Activated naive CD4-positive, alpha-beta T cell treated with anti-CD3 and anti-CD28 coated beads for 36 hours (primary cell): ENCODE measurements at regions of chr3 and their contacts with region 1.

Region 1: DNA sequence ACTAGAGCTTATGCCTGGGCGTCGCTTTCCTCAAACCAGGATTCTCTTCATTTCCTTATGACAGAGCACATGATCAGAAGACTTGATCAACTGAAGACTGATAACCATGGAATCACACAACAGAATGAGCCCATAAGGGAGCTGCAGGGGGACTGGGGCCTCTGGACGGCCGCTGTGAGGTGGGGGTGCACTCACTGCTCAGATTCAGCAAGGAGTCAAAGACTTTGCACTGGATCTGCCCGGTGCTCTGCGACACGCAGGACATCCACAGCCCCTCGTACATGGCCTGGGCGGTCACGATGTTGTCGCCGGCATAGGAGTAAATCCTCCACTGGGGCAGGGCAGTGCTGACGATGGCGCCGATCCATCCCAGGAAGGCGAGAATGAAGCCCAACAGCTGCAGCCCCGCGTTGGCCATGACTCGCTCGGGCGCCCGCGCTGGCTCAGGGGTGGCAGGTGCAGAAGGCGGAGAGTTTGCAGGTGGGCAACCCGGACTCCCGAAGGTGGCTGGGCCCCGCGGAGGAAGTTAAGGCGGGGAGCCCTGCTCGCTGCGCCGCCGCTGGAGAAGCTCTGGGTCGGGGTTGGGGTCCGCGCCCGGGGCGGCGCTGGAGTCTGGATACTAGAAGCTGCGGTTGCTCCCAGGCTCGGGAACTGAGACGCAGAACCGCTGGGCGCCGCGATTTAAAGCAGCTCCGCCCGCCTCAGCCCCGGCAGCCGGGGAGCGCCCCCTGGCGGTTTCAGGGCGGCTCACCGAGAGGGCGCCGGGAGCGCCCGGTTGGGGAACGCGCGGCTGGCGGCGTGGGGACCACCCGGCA is at the start of gene CLDN1:
- DNase-seq: peak; percentile 75
- H3K4me3 Mint-ChIP-seq: peak within 1 kb of the TSS; percentile 75
- H3K27ac Mint-ChIP-seq: no peak within 1 kb of the TSS
- H3K4me1 Mint-ChIP-seq: peaks cover 30% of the 10 kb centered on the region
- H3K27me3 Mint-ChIP-seq: peaks cover 36% of the 10 kb centered on the region
- total RNA-seq, gene CLDN1: 0.88 to 0.96 TPM

Region 2: DNA sequence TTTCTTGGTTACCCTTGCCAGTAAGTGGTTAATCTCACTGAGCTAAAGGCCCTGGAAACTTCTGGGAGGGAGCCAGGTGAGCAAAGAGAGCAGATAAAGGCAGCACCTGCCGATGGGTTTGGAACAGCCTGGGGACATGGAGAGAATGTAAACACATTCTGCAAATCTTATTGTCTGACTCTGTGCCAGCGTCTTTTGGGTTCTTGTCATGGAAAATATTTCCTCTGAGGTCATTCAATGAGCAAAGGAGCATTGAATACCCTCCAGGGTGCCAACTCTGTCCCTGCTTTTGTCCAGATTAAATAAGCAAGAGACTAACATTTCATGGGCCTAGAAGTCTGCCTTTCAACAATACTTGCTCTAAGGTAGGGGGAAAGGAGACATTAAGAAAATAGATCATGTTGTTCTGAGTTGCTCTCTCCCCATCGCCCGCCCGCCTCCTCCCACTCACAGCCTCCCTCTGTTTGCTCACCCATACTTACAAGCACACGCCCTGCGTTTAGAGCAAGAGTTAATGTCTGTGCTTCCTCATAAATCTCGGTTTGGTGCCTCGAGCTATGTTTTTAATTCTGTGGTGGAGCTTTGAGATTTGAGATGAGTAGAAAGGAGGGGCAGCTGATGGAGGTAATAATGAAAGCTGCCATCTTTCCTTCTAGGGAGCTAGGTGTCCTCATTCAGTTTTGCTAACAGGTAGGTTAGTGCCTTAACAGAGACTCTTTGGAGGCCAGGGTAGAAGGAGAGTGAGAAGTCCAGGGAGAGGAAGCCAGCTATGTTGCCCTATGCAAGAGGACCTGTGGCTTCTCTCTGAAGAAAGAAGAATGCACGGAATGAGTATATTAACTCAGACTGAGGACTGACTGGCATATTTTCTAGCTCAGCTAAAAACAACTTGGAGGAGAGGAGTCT is 1017.3 kb before region 1 on chr3:
- CTCF ChIA-PET with region 1: no interaction called
- intact Hi-C with region 1: loop called (anchors 10 kb)
- DNase-seq: peak; percentile 59
- H3K4me3 Mint-ChIP-seq: peak overlapping the region; percentile 17
- H3K27ac Mint-ChIP-seq: peak overlapping the region; percentile 68
- H3K4me1 Mint-ChIP-seq: peaks cover 57% of the 10 kb centered on the region
- H3K27me3 Mint-ChIP-seq: no peaks in the 10 kb centered on the region

Region 3: DNA sequence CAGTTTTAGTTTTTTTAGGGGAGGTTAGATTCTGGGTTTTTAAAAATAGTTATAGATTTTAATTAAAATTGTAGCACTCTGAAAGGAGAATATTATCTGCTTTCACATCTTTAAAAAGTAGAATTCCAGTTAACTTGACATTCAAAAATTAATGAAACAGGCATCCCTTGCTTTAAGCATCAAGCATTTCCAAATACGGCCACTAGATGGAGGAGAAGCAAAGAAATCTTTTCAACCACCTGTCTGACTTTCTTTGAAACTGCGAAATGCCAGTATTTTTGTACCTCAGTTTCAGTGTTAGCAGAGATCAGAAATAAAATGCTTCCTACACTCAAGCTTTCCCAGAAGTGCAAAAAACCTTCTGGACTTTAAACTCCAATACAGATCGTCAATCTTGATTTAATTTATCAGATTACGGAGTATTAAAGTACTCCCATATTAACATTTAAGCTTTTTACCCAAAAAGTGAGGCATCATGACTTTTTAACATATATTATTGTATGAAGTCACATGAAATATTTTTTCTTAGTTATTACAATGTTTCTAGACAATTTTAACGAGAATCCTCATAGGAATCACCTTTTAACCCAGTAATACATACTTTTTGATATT is 354.6 kb before region 1 on chr3:
- CTCF ChIA-PET with region 1: interaction called, 5 read pairs
- intact Hi-C with region 1: loop called (anchors 1 kb)
- DNase-seq: peak; percentile 28
- H3K4me3 Mint-ChIP-seq: no peak overlapping the region
- H3K27ac Mint-ChIP-seq: no peak overlapping the region
- H3K4me1 Mint-ChIP-seq: no peaks in the 10 kb centered on the region
- H3K27me3 Mint-ChIP-seq: peaks cover 3% of the 10 kb centered on the region

Region 4: DNA sequence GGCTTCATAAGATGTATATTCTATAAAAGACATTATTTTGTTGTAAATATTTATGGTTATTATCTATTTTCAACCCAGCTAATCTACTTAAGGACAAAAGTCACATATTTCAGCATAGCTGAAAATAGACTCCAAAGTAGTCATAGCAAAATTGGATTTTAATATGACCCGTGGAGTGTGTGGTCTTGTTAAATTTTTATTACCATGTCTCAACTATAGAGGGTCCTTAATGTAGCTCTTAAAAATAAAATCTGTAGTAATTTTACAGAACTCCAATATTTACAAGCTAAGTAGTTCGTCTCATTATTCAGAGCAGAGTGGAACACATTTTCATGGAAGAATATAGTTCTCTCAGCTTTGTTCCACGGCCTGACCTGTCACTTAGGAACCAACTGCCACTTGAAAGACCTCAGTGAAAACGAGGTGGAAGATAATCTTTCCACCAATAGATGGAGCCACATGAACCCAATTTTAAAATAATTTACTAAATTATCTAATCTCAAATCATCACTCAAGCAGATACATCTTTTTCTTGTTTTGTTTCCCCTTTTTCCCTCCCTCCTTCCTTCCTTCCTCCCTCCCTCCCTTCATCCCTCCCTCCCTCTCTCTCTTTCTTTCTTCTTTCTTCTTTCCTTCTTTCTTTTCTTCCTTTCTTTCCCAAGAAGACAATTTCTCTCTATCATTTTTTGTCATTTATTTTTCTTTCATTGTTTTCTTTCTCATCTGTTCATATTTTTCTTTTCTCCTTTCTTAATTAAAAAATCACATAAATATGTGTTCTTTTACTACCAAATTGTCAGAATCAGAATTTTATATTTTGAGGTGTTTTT is 96.9 kb before region 1 on chr3:
- CTCF ChIA-PET with region 1: interaction called, 14 read pairs
- intact Hi-C with region 1: loop called (anchors 1 kb)
- DNase-seq: no peak
- H3K4me3 Mint-ChIP-seq: no peak overlapping the region
- H3K27ac Mint-ChIP-seq: no peak overlapping the region
- H3K4me1 Mint-ChIP-seq: no peaks in the 10 kb centered on the region
- H3K27me3 Mint-ChIP-seq: peaks cover 2% of the 10 kb centered on the region

Region 5: DNA sequence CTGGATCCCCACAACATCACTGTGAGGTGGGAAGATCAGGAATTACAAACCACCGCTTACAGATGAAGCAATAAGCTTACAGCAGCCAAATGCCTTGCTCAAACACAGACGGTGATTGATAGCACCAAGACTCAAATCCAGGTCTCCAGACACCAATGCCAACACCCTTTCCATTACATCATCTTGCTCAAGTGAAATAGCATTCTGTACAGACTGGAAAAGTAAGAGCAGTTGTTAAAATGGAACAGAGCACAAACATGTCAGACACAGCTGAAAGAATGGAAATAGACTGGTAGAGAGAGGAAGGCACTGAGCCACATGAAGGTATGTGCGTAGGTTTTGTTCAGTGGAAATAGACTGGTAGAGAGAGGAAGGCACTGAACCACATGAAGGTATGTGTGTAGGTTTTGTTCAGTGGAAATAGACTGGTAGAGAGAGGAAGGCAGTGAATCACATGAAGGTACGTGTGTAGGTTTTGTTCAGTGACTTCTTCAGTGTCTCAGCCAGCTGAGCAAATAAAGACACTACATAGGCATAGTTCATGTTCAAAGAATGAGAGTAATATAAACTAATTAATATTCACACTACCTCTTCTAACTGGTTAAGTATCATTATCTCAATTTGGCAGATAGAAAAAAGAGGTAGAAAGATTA is 15.4 kb before region 1 on chr3:
- CTCF ChIA-PET with region 1: interaction called, 7 read pairs
- intact Hi-C with region 1: loop called (anchors 1 kb)
- DNase-seq: peak; percentile 49
- H3K4me3 Mint-ChIP-seq: no peak overlapping the region
- H3K27ac Mint-ChIP-seq: peak overlapping the region; percentile 33
- H3K4me1 Mint-ChIP-seq: peaks cover 25% of the 10 kb centered on the region
- H3K27me3 Mint-ChIP-seq: no peaks in the 10 kb centered on the region

Region 6: GRCh38 chr3:190491533-190492054 is 169.6 kb after region 1 on chr3:
- CTCF ChIA-PET with region 1: no interaction called
- intact Hi-C with region 1: loop called (anchors 5 kb)
- DNase-seq: peak; percentile 30
- H3K4me3 Mint-ChIP-seq: no peak overlapping the region
- H3K27ac Mint-ChIP-seq: no peak overlapping the region
- H3K4me1 Mint-ChIP-seq: peaks cover 24% of the 10 kb centered on the region
- H3K27me3 Mint-ChIP-seq: peaks cover 46% of the 10 kb centered on the region